Activated CD4-positive, alpha-beta T cell treated with anti-CD3 and anti-CD28 coated beads, Interleukin-2, amount 10 ng/mL, durations not matched to agents 24 days and 14 days (primary cell): ENCODE measurements at regions of chr1 and their contacts with region 1.

Region 1: GRCh38 chr1:25562101-25562927 is 18.9 kb downstream of the LDLRAP1 start:
- DNase-seq: peak; percentile 91
- H3K4me3 Mint-ChIP-seq: peak overlapping the region; percentile 65
- H3K27ac Mint-ChIP-seq: peak overlapping the region; percentile 80
- H3K4me1 Mint-ChIP-seq: peaks cover 54% of the 10 kb centered on the region
- H3K27me3 Mint-ChIP-seq: no peaks in the 10 kb centered on the region

Region 2: GRCh38 chr1:25247024-25247828 is 315.1 kb before region 1 on chr1 and contains the start of gene RSRP1:
- intact Hi-C with region 1: no loop called
- DNase-seq: peak; percentile 100
- H3K4me3 Mint-ChIP-seq: peak within 1 kb of the TSS; percentile 97
- H3K27ac Mint-ChIP-seq: peak within 1 kb of the TSS; percentile 99
- H3K4me1 Mint-ChIP-seq: peaks cover 42% of the 10 kb centered on the region
- H3K27me3 Mint-ChIP-seq: peaks cover 7% of the 10 kb centered on the region
- total RNA-seq, gene RSRP1: 117 and 118 TPM in 2 replicates

Region 3: GRCh38 chr1:25549273-25550154 is 12.8 kb before region 1 on chr1:
- intact Hi-C with region 1: loop called (anchors 1 kb)
- DNase-seq: peak; percentile 90
- H3K4me3 Mint-ChIP-seq: peak overlapping the region; percentile 71
- H3K27ac Mint-ChIP-seq: peak overlapping the region; percentile 87
- H3K4me1 Mint-ChIP-seq: peaks cover 54% of the 10 kb centered on the region
- H3K27me3 Mint-ChIP-seq: peaks cover 4% of the 10 kb centered on the region